BJ (cell line): ENCODE measurements at regions of chr5 and their contacts with region 1.

Region 1: DNA sequence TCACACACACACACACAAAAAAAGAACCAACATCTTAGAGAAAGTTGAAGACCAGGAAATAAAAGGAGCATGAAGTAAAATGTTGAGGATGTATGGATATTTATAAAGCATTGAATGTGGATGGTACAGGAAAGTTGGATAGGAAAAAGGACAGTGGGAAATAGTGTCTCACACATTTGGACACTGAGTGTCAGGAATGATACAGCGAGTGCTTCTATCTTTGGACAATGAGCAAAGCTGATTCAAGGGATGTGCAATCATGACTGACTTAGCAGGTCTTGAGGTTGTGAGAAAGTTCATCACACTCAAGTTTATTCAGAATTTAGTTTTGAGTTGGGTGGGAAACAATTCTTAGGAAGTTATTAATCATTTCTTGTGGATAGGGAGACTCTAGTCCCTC is 50.1 kb upstream of the SRP19 start:
- DNase-seq: no peak
- H3K4me3 ChIP-seq: no peak overlapping the region
- H3K27me3 ChIP-seq: no peaks in the 10 kb centered on the region
- CTCF ChIP-seq: no peak

Region 2: DNA sequence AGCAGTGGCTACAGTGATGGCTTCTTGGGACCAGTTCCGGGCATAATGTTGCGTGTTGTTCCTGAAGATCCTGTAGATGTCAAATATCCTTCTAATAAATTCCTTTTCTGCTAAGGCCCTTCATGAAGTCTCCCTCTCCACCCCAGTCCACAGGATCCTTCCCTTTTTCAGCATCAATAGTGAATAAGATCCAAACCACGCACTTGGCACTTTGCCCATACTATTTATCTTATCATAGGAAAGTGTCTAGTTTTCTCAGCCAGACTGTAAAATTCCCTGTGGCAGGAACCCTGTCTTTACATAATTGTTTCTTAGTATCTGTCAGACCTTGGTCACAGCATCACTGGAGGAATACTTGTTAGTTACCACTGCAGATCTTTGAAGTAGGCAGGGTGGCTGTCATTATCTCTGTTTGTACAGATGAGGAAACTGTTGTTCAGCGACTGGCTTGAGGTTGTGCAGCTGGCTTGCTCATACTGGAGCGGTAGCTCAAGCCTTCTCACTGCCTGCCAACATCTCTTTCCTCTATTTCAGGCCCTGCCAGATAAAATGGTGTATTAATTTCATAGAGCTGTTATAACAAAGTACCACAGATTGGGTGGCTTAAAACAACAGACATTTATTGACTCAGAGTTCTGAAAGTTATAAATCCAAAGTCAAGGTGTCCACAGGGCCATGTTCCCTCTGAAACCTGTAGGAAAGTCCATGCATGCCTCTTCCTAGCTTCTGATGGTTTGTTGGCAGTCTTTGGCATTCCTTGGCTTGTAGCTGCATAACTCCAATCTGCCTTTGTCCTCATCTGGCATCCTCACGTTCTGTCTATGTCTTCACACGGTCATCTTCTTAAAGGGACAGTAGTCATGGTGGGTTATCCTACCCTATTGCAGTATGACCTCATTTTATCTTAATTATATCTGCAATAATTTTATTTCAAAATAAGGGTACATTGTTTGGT is 106.9 kb before region 1 on chr5:
- CTCF ChIA-PET with region 1: no interaction called
- POLR2A ChIA-PET with region 1: no interaction called
- DNase-seq: no peak
- H3K4me3 ChIP-seq: no peak overlapping the region
- H3K27me3 ChIP-seq: no peaks in the 10 kb centered on the region
- CTCF ChIP-seq: no peak

Region 3: DNA sequence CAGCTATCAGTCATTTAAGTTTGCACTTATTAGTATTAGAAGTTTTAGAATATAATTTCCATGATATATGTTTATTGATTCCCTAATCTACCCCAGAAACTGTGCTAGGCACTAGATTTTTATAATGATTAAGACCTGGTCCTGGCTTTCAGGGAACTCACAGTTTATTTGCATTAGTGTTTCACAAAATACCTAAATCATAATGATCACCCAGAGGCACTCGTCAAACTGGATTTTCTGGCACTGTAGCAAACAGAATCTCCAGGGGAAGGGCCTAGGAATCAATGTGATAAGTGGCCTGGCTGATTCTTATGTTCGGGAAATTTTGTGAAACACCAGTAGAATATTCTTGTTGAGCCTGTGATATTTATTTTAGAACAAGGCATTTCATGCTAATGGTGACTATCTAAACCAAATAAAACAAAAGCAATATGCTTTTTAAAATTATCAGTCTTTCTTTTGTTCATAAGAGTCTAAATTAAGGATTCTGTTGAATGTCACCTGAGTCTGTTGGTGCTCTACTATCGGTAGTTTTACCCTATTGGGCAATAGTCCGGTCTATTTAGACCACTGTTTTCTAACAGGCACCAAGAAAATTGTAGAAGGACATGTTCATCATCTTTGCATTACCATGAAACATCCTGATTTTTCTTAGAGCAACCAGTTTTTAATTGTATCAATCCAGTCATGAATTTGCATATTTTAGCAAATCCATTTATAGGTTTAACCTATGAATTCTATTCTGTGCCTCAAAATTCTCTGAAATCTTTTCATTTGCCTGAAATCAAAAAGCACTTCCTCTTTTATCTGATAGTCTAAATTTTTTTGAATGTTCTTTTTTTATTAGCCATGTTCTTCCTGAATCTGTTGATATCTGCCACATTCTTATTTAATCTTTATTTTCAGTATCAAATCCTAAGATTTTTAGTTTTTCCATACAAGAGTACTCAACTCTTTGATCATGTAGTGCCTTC is 12.9 kb after region 1 on chr5:
- CTCF ChIA-PET with region 1: no interaction called
- POLR2A ChIA-PET with region 1: no interaction called
- DNase-seq: no peak
- H3K4me3 ChIP-seq: no peak overlapping the region
- H3K27me3 ChIP-seq: no peaks in the 10 kb centered on the region
- CTCF ChIP-seq: no peak

Region 4: DNA sequence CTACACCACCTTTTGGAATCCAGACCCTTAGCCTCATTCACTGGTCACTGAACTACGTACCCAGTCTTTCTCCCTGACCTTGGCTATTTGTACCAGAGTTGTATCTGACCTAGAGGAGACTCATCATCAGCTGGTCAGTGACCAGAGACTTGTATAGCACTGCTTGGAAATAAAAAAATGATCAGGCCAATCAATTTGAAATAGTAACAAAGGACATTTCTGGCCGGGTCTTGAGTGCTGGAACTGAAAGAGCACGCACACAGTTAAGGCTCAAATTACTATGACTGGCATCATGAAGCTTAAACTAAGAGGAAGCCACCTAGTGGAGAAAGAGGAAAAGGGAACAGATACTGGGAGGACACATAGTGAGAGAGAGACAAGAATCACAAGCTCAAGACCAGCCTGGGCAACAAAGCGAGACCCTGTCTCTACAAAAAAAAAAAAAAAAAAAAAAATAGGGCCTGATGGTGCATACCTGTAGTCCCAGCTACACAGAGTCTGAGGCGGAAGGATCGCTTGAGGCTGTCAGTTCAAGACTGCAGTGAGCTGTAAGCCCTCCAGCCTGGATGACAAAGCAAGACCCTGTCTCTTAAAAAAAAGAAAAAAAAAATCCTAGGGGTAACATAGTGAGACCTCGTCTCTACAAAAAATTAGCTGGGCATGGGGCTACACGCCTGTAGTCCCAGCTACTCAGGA is 37.2 kb after region 1 on chr5:
- CTCF ChIA-PET with region 1: interaction called, 10 read pairs
- POLR2A ChIA-PET with region 1: no interaction called
- DNase-seq: peak; percentile 26
- H3K4me3 ChIP-seq: no peak overlapping the region
- H3K27me3 ChIP-seq: no peaks in the 10 kb centered on the region
- CTCF ChIP-seq: peak; percentile 78

Region 5: GRCh38 chr5:112917453-112917995 is 106.5 kb after region 1 on chr5:
- CTCF ChIA-PET with region 1: no interaction called
- POLR2A ChIA-PET with region 1: no interaction called
- DNase-seq: no peak
- H3K4me3 ChIP-seq: no peak overlapping the region
- H3K27me3 ChIP-seq: no peaks in the 10 kb centered on the region
- CTCF ChIP-seq: peak; percentile 21; the same call in 1 of the 2 replicates